ENCODE measurements at regions of chr1 and their contacts with region 1.

Region 1: GRCh38 chr1:90068611-90069280 is 73.8 kb downstream of the ZNF326 start:
- DNase-seq: no peak
- ATAC-seq: no peak
- H3K4me3 ChIP-seq: no peak overlapping the region
- H3K27ac ChIP-seq: no peak overlapping the region
- H3K4me1 ChIP-seq: no peaks in the 10 kb centered on the region
- H3K27me3 ChIP-seq: no peaks in the 10 kb centered on the region
- CTCF ChIP-seq: no peak
- EP300 ChIP-seq: no peak
- POLR2A ChIP-seq: no peak
- RAD21 ChIP-seq: no peak

Region 2: GRCh38 chr1:88502886-88503285 is 1565.9 kb before region 1 on chr1:
- CTCF ChIA-PET with region 1: no interaction called
- POLR2A ChIA-PET with region 1: interaction called, 12 read pairs
- RAD21 ChIA-PET with region 1: no interaction called
- SMC1A ChIA-PET with region 1: no interaction called
- in situ Hi-C with region 1: no loop called
- intact Hi-C with region 1: no loop called
- DNase-seq: no peak
- ATAC-seq: no peak
- H3K4me3 ChIP-seq: no peak overlapping the region
- H3K27ac ChIP-seq: no peak overlapping the region
- H3K4me1 ChIP-seq: no peaks in the 10 kb centered on the region
- H3K27me3 ChIP-seq: no peaks in the 10 kb centered on the region
- CTCF ChIP-seq: no peak
- EP300 ChIP-seq: no peak
- POLR2A ChIP-seq: no peak
- RAD21 ChIP-seq: no peak

Region 3: GRCh38 chr1:89987170-89987819 is 81.5 kb before region 1 on chr1:
- CTCF ChIA-PET with region 1: no interaction called
- POLR2A ChIA-PET with region 1: no interaction called
- RAD21 ChIA-PET with region 1: no interaction called
- SMC1A ChIA-PET with region 1: no interaction called
- in situ Hi-C with region 1: no loop called
- intact Hi-C with region 1: no loop called
- DNase-seq: peak; percentile 45
- ATAC-seq: peak; percentile 94
- H3K4me3 ChIP-seq: no peak overlapping the region
- H3K27ac ChIP-seq: no peak overlapping the region
- H3K4me1 ChIP-seq: no peaks in the 10 kb centered on the region
- H3K27me3 ChIP-seq: no peaks in the 10 kb centered on the region
- CTCF ChIP-seq: peak; percentile 78 to 92 (median 88); a peak in 5 of 6 replicates
- EP300 ChIP-seq: no peak
- POLR2A ChIP-seq: no peak
- RAD21 ChIP-seq: peak; percentile 98

Region 4: GRCh38 chr1:90100566-90100965 is 31.8 kb after region 1 on chr1:
- CTCF ChIA-PET with region 1: no interaction called
- POLR2A ChIA-PET with region 1: no interaction called
- RAD21 ChIA-PET with region 1: no interaction called
- SMC1A ChIA-PET with region 1: no interaction called
- in situ Hi-C with region 1: no loop called
- intact Hi-C with region 1: no loop called
- DNase-seq: no peak
- ATAC-seq: no peak
- H3K4me3 ChIP-seq: no peak overlapping the region
- H3K27ac ChIP-seq: no peak overlapping the region
- H3K4me1 ChIP-seq: no peaks in the 10 kb centered on the region
- H3K27me3 ChIP-seq: no peaks in the 10 kb centered on the region; a peak in 1 of 4 replicates
- CTCF ChIP-seq: no peak
- EP300 ChIP-seq: no peak
- POLR2A ChIP-seq: no peak
- RAD21 ChIP-seq: no peak

Region 5: DNA sequence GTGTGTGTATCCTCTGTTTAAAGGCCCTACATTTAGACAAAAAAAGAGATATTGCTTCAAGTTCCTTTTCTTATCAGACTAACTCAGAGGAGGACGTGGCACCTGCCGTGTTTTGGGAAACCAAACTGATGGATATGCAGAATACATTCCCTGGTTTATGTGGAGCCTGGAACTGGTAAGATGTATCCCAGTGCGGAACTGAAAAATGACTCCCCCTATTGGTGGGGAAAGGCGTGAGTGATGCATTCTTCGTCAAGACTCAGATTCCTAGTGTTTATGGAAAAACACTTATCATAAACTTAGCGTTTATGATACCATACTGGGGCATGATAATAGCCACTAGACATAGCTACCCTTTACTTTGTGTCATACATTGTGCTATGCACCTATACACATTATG is 80.4 kb after region 1 on chr1:
- CTCF ChIA-PET with region 1: no interaction called
- POLR2A ChIA-PET with region 1: no interaction called
- RAD21 ChIA-PET with region 1: no interaction called
- SMC1A ChIA-PET with region 1: no interaction called
- in situ Hi-C with region 1: no loop called
- intact Hi-C with region 1: no loop called
- DNase-seq: no peak
- ATAC-seq: no peak
- H3K4me3 ChIP-seq: no peak overlapping the region
- H3K27ac ChIP-seq: no peak overlapping the region
- H3K4me1 ChIP-seq: no peaks in the 10 kb centered on the region
- H3K27me3 ChIP-seq: no peaks in the 10 kb centered on the region
- CTCF ChIP-seq: no peak
- EP300 ChIP-seq: no peak
- POLR2A ChIP-seq: no peak
- RAD21 ChIP-seq: no peak